Activated CD4-positive, alpha-beta T cell treated with anti-CD3 and anti-CD28 coated beads, Interleukin-2, amount 10 ng/mL, durations not matched to agents 24 days and 14 days (primary cell): ENCODE measurements at regions of chr2 and their contacts with region 1.

Region 1: DNA sequence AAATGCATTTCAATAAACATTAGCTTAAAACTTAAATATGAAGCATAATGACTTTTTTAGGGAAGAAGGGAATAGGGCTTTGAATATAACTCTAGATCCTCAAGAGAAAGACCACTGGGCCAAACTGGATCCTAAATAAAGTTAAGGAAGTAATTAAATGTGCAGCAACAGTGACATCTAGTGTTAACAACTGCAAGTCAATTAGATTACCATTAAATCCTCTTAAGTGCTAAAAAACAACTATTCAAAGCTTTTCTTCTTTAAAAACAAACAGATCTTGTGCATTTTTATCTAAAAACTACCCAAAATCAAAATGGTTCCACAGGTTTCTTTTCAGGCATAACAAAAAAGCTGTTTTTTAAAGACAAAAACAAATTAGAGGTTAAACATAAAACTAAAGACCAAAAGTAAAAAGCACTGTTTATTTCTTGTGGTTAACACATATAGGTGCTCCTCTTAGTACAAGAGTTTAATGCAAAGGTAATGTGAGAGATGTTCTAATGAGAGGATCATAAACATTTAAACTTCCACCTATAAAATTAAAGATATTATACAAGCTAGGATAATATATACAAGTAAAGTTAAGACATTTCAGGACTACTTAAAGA is 111.4 kb downstream of the THADA start:
- DNase-seq: peak; percentile 65
- H3K4me3 Mint-ChIP-seq: no peak overlapping the region
- H3K27ac Mint-ChIP-seq: no peak overlapping the region
- H3K4me1 Mint-ChIP-seq: peaks cover 8% of the 10 kb centered on the region
- H3K27me3 Mint-ChIP-seq: no peaks in the 10 kb centered on the region

Region 2: DNA sequence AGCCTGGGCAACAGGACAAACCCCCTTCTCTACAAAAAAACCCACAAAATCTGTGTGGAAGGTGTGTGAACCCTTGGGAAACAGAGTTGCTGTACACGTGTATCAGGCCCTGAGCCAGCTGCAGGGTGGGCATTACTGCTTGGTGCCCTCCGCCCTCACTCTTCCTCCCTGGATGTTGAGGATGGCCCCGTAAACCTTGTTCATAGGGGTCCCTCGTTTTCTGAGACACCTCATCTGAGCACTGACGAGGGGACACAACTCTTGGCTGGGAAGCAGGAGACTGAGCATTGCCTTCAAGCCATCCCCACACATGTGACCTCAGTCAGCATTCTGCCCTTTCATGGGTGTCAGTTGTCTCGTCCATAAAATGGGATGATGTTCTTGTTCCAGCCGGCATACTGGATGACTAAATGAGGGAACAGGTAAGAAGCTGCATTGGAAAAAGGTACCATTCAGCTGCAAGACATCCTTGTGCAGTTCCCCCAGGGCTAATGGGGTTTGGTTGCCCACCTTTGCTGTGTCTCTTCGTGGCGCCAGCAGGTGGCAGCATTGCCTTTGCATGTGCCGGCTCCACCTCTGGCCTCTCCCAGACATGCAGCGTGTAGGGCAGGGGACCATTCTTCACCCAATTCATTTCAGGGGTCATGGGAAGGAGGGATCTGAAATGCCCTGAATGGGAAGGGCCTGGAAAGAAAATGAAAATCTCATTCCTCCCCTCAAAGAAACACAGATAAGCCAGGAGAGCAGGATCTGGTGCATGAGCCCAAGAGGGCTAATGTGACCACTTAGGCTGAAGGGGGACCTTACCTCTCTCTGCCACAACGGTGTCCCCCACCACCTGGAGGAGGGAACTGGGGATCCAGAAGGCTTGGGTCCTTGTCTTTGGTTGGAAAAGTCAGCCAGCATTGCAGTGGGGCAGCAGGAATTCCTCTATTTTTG is 655.7 kb before region 1 on chr2:
- intact Hi-C with region 1: loop called (anchors 10 kb)
- DNase-seq: peak; percentile 91
- H3K4me3 Mint-ChIP-seq: no peak overlapping the region
- H3K27ac Mint-ChIP-seq: no peak overlapping the region
- H3K4me1 Mint-ChIP-seq: peaks cover 7% of the 10 kb centered on the region
- H3K27me3 Mint-ChIP-seq: peaks cover 13% of the 10 kb centered on the region

Region 3: DNA sequence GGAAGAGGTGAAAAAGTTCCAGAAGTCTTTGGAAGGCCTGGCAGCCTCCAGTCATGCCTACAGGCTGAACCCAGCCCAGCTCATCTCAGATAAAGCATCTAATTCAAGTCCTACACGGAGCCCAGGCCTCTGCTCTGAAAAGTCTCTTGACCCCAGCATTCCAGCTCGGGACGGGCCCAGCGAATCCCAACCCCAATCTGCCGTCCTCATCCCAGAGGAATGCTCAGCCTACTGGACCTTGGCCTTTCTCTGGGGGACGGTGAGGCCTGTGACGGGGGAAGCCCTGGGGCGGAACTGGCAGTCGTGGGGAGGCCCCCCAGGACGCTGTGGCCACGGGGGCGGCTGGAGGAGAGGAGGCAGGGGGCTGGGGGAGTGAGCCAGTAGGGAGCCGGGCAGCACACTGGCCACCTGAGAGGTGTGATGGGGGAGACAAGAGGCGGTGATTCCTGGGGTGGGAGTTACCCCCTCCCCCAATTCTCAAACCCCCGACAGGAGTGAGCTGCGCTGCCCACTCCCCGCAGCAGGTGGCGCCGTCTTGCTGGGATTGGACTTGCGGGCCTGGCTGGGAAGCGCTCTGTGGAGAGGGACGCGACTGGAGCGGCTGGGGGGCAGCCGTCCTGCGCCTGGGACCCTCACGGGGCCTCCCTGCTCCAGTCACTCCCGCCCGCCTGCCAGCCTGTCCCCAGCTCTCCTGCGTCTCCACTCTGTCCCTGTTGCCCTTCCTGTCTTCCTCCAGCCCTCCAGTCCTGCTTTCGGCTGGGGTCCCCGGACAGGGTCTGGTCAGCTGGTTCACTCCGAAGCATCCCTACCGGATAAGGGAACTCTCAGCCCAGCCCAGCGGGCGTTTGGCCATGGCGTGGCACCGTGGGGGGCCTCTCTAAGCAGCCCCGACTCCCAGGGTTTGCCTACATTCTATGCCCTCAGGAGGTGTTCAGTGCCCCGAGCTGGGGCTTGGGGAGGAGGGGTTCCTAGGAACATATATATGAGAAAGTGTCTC is 509.4 kb before region 1 on chr2:
- intact Hi-C with region 1: loop called (anchors 10 kb)
- DNase-seq: peak; percentile 85
- H3K4me3 Mint-ChIP-seq: no peak overlapping the region
- H3K27ac Mint-ChIP-seq: no peak overlapping the region
- H3K4me1 Mint-ChIP-seq: peaks cover 10% of the 10 kb centered on the region
- H3K27me3 Mint-ChIP-seq: no peaks in the 10 kb centered on the region

Region 4: DNA sequence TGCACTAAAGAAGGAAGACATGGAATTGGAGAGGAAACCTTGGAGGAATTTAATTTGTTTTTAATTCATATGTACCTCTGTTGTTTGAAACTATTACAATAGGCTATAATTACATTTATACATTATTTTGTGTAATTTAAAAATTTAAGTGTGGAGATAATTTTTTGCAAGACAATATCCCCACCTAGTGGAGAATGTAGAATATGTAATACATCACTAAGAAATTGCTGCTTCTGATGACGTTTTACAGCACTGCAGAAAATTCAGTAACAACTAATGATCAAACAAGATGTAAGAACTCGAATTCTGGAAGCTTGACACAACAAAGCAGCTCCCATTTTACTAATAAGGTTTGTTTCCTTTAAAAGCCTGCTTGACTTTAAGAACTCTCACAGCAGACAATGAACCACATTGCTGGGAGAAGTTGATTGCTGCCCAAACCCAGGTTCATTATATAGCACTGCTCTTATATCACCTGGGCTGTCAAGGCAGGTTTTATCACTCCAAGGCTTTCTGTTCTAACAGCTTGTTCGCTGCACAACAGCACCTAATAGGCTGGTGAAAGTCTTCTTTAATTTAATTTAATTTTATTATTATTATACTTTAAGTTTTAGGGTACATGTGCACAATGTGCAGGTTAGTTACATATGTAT is 58.0 kb after region 1 on chr2:
- intact Hi-C with region 1: loop called (anchors 5 kb)
- DNase-seq: peak; percentile 56
- H3K4me3 Mint-ChIP-seq: no peak overlapping the region
- H3K27ac Mint-ChIP-seq: no peak overlapping the region
- H3K4me1 Mint-ChIP-seq: peaks cover 8% of the 10 kb centered on the region
- H3K27me3 Mint-ChIP-seq: no peaks in the 10 kb centered on the region